Psoas muscle (tissue), 8 donors: ENCODE measurements at regions of chr12 and their contacts with region 1.

Region 1: DNA sequence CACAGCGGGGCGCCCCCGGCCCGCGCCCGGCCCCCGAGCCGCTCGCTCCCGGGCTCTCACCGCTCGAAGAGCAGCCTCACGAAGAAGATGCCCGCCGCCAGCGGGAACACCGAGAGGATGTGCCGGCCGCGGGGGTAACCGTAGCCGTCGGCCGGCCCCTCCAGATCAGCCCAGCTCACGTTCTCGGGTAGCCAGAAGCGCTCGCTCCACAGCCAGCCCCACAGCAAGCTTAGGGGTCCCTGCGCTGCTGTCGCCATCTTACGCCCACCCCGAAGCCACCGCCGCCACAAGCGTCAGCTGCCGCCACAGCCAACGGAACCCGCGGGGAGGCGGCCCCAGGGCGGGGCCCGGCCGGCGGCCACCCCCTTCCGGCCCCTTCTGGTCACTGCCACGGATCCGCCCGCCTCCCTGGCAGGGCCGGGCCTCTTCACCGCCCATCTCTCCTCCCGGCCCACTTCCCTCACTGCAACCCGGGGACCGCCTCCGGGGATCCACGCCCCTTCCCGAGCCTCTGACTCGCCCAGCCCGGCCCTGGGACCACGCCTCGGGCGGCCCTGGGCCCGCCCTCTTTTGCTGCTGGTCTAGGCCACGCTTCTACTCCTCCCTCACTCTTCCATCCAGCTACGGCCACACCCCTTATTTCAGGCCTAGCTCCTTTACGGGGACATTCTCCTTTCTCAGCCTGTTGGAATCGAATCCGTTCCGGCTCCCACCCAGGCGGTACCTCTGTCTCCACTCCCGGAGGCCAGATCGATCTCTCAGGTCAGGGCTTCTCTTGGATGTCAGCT is at the start of gene CERS5:
- DNase-seq: peak; percentile 99
- ATAC-seq: peak; percentile 99
- H3K4me3 ChIP-seq: peak within 1 kb of the TSS; percentile 89
- H3K27ac ChIP-seq: peak within 1 kb of the TSS; percentile 81
- H3K4me1 ChIP-seq: no peaks in the 10 kb centered on the region
- H3K27me3 ChIP-seq: no peaks in the 10 kb centered on the region
- CTCF ChIP-seq: peak; percentile 37
- total RNA-seq, gene CERS5: 5.2 to 10.7 (median 6.6) TPM

Region 2: DNA sequence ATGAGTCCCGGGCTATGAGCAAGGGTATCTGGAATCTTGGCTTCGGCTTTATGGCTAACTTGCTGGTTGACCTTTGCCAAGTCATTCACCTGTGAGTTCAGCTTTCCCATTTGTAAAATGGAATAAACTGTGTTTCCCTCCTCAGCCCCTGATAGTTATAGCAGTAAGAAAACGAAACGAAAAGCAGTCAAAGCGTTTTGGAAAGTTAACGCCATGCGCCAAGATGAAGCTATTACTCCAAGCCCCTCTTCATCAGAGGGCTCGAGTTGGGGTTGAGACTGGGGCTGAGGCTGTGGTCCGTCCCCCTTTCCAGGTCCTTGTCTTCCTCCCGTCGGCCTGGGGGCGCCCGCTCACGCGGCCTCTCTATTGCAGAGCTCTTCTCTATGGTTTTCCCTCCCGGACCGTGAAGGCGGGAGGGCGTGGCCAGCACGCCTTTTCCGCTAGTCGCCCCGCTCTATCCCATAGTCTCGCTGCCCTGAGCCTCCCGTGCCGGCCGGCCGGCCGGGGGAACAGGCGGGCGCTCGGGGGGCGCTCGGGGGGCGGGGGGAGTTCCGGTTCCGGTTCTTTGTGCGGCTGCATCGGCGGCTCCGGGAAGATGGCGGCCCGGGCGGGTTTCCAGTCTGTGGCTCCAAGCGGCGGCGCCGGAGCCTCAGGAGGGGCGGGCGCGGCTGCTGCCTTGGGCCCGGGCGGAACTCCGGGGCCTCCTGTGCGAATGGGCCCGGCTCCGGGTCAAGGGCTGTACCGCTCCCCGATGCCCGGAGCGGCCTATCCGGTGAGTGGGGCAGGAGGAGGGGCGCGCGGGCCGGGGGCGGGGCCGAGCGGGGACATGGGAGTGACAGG is 82.2 kb before region 1 on chr12 and contains the start of gene SMARCD1:
- intact Hi-C with region 1: loop called in 1 of 2 experiments (anchors 5 kb)
- DNase-seq: peak; percentile 91 to 95
- ATAC-seq: peak; percentile 91 to 94 (median 92)
- H3K4me3 ChIP-seq: peak within 1 kb of the TSS; percentile 86
- H3K27ac ChIP-seq: peak within 1 kb of the TSS; percentile 94
- H3K4me1 ChIP-seq: peaks cover 14% of the 10 kb centered on the region
- H3K27me3 ChIP-seq: no peaks in the 10 kb centered on the region
- CTCF ChIP-seq: peak; percentile 21
- total RNA-seq, gene SMARCD1: 14.2 to 21.1 (median 17.9) TPM

Region 3: DNA sequence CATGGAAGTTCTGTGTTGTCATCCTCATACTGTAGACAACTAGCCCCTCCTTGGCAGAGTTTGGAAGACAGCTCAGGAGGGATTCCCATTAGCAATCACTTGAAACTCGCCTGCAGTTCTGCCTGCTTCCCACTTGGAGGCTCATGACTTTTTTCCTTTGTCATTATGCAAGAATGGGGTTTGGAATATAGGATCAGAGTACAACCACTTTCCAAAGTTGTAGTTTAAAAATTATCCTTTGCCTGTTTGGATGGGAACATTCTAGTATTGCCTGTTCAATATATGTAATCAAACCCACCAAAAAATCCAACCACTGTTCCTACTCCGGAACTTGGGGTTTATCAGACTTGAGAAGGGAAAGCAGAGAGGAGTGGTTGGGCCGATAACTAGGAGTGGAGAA is 65.6 kb before region 1 on chr12:
- intact Hi-C with region 1: no loop called
- DNase-seq: no peak
- ATAC-seq: no peak
- H3K4me3 ChIP-seq: no peak overlapping the region
- H3K27ac ChIP-seq: no peak overlapping the region
- H3K4me1 ChIP-seq: peaks cover 19% of the 10 kb centered on the region
- H3K27me3 ChIP-seq: no peaks in the 10 kb centered on the region
- CTCF ChIP-seq: peak; percentile 36

Region 4: DNA sequence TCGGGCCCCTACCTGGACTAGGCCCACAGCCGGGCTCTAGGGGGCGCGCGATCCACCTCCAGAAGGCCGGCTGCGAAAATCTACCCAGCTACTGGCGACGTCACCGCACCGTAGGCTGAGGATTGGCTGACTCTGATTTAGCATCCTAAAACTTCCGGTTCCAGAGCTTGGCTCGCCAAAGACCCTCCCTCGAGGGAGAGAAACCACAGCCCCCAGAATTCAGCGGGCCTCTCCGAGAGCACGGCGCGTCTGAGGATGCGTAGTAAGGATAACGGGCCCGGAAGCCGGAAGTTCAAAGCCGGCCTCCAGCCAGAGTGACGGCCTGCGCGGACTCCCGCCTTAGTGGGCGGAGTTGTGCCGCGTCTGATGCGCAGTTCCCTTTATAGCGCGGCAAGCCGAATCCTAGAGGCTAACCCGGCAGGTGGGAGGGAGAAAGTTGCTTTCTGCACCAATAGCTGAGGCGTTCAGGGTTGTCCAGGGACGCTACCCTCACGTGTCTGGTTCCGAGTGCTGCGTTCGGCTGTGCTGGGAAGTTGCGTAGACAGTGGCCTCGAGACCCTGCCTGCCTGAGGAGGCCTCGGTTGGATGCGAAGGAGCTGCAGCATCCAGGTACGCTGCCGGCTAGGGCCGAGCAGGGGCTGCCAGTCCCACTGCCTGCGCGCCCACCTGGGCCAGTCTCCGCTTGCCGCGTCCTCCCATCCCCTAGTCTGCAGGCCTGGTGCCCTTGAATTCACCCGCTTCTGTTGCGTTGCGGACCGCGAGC is 55.4 kb before region 1 on chr12 and contains the start of gene COX14:
- intact Hi-C with region 1: loop called (anchors 1 to 2 kb)
- DNase-seq: peak; percentile 98 to 99
- ATAC-seq: peak; percentile 80 to 85 (median 83)
- H3K4me3 ChIP-seq: peak within 1 kb of the TSS; percentile 87
- H3K27ac ChIP-seq: peak within 1 kb of the TSS; percentile 96
- H3K4me1 ChIP-seq: peaks cover 70% of the 10 kb centered on the region
- H3K27me3 ChIP-seq: no peaks in the 10 kb centered on the region
- CTCF ChIP-seq: peak; percentile 80
- total RNA-seq, gene COX14: 101 to 141 (median 115) TPM